WTC11 (cell line): ENCODE measurements at regions of chr22 and their contacts with region 1.

Region 1: GRCh38 chr22:43689356-43689755 is 122.7 kb downstream of the EFCAB6 start:
- DNase-seq: no peak
- ATAC-seq: no peak
- H3K4me3 Mint-ChIP-seq: no peak overlapping the region
- H3K27ac Mint-ChIP-seq: no peak overlapping the region
- H3K4me1 Mint-ChIP-seq: peaks cover 11% of the 10 kb centered on the region; the same call in 1 of the 2 replicates
- H3K27me3 Mint-ChIP-seq: no peaks in the 10 kb centered on the region
- CTCF ChIP-seq: no peak

Region 2: DNA sequence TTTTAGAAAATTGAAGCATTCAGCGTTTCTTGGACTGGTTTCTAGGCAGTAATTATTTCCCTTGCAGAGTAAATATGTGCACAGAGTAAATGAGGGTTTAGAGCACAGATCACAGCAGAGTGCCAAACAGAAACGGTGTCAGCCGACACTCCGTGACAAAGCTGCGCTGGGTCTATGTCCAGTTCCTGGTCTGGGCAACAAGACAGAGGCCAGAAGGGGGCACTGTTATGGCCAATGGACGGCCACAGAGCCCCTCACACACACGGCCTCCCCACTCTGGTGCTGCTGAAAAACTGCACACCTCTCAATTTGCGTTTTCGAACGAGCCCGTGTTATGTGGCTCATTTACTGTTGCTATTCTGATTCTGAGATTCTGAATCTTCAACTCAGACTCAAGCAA is 96.9 kb before region 1 on chr22:
- CTCF ChIA-PET with region 1: no interaction called
- POLR2A ChIA-PET with region 1: interaction called, 11 read pairs
- DNase-seq: peak; percentile 68
- ATAC-seq: peak; percentile 86
- H3K4me3 Mint-ChIP-seq: no peak overlapping the region
- H3K27ac Mint-ChIP-seq: no peak overlapping the region
- H3K4me1 Mint-ChIP-seq: no peaks in the 10 kb centered on the region
- H3K27me3 Mint-ChIP-seq: peaks cover 5% of the 10 kb centered on the region; the same call in 1 of the 2 replicates
- CTCF ChIP-seq: peak; percentile 49

Region 3: GRCh38 chr22:43812149-43812842 is 122.9 kb after region 1 on chr22 and contains the start of gene EFCAB6:
- CTCF ChIA-PET with region 1: no interaction called
- POLR2A ChIA-PET with region 1: no interaction called
- DNase-seq: peak; percentile 93
- ATAC-seq: peak; percentile 89
- H3K4me3 Mint-ChIP-seq: peak within 1 kb of the TSS; percentile 82
- H3K27ac Mint-ChIP-seq: peak within 1 kb of the TSS; percentile 75
- H3K4me1 Mint-ChIP-seq: peaks cover 21% of the 10 kb centered on the region
- H3K27me3 Mint-ChIP-seq: no peaks in the 10 kb centered on the region; the same call in 1 of the 2 replicates
- CTCF ChIP-seq: no peak
- total RNA-seq, gene EFCAB6: 0.25 to 0.94 TPM (median 0.41 TPM) in 3 replicates